ENCODE measurements at regions of chr4 and their contacts with region 1.

Region 1: DNA sequence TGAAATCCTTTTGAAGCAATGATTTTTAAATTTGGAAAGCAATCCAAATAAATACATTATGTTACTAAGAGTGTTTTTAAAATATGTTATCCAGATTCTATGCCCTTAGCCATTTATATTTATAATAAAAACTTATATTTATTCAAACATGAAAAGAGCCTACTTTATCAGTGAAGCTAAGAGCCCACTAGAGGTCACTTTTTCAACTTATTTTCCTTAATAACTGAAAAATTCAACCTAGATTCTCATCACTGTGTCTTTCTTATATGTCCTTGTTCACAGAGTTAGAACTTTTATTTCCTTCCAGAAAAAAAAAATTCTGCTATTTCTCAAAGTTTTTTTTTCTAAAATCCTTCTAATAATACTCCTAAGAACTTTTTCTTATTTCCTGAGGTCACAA is 23.9 kb downstream of the PRDM8 start:
- DNase-seq: no peak
- H3K4me3 ChIP-seq: no peak overlapping the region
- H3K27me3 ChIP-seq: no peaks in the 10 kb centered on the region
- CTCF ChIP-seq: peak; percentile 36

Region 2: GRCh38 chr4:80309294-80310004 is 88.3 kb after region 1 on chr4:
- CTCF ChIA-PET with region 1: interaction called, 11 read pairs
- POLR2A ChIA-PET with region 1: no interaction called
- DNase-seq: peak; percentile 54
- H3K4me3 ChIP-seq: no peak overlapping the region
- H3K27me3 ChIP-seq: no peaks in the 10 kb centered on the region
- CTCF ChIP-seq: no peak

Region 3: GRCh38 chr4:80322716-80323115 is 101.6 kb after region 1 on chr4:
- CTCF ChIA-PET with region 1: interaction called, 24 read pairs
- POLR2A ChIA-PET with region 1: no interaction called
- DNase-seq: no peak
- H3K4me3 ChIP-seq: no peak overlapping the region
- H3K27me3 ChIP-seq: no peaks in the 10 kb centered on the region
- CTCF ChIP-seq: peak; percentile 54

Region 4: DNA sequence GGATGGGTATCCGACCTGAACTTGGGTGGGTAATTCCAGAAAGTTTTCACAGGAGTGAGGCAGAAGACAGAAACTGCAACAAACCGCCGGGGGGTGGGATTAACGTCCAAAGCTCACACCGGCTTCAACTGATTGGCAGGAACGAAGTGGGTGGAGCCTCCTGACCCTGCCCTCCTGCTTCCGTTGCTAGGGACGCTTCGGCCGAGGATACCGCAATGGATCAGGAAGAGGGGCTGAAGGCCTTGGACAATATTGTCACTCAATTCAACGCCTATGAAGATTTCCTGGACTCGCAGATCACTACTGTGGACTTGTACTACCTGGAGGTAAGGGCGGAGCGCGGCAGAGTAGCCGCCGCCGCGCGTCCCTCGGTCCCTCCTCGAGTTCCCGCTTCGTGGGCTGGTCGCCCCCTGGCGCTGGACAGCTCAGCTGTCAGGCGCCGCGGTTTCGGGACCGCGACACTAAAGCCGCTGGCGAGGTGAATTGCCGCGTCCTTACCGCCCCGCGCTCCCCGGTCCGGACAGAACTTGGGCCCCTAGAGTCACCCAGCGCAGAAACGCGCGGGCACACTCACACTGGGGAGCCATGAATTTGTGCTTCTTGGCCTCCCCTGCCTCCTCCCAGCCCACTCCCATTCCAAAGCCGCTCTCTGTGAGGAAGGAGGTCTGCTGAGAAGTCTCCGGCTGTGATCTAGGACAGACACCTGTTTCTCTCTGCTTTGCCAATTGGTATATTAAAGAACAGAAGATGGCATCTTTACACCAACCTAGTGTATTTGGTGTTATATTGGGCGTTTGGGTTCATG is 114.6 kb after region 1 on chr4 and contains the start of gene CFAP299:
- CTCF ChIA-PET with region 1: interaction called, 51 read pairs
- POLR2A ChIA-PET with region 1: no interaction called
- DNase-seq: peak; percentile 46
- H3K4me3 ChIP-seq: peak within 1 kb of the TSS; percentile 73
- H3K27me3 ChIP-seq: no peaks in the 10 kb centered on the region
- CTCF ChIP-seq: peak; percentile 79
- polyA plus RNA-seq, gene CFAP299: 0.23 and 3.3 TPM in 2 replicates

Measured in BJ (cell line).